ENCODE measurements at regions of chr1 and their contacts with region 1.

Region 1: GRCh38 chr1:208093754-208094719 is 150.1 kb downstream of the PLXNA2 start:
- DNase-seq: peak; percentile 78
- H3K4me3 Mint-ChIP-seq: no peak overlapping the region
- H3K27ac Mint-ChIP-seq: no peak overlapping the region
- H3K4me1 Mint-ChIP-seq: no peaks in the 10 kb centered on the region
- H3K27me3 Mint-ChIP-seq: no peaks in the 10 kb centered on the region

Region 2: DNA sequence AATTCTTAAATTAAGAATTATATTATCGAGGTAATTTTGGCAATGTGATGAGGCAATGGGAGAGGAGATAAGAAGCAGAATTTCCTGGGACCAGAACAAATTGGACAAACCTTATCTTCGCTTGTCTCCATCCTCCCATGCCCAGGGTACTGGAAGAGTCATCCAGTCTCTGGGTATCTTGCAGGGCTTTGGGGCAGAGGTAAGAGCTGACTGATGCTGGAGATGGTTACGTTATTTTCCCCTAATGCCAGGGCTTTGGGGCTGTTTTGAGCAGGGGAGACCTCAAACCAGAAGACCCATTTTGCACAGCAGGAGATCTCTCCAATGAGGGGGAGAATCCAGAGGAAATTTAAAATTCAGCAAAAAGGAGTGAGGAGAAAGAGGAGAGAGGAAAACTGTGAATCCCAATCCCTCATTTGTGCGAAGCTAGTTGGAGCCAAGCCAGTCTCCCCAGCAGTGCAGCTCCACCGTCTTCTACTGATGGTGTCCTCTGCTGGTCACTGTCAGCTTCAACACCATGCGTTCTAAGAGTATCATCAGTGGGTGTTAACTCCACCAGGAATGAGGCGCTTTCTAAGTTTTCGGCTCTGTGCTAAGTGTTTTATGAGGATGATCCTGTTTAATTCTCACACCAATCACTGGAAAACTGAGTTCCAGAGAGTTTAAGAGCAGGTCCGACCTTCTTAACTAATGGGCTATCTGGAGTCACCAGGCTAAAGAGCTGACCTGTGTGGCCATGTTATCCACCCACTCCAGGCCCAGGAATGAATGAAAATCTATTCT is 96.4 kb before region 1 on chr1:
- CTCF ChIA-PET with region 1: interaction called, 10 read pairs
- DNase-seq: peak; percentile 69
- H3K4me3 Mint-ChIP-seq: no peak overlapping the region
- H3K27ac Mint-ChIP-seq: no peak overlapping the region
- H3K4me1 Mint-ChIP-seq: no peaks in the 10 kb centered on the region
- H3K27me3 Mint-ChIP-seq: peaks cover 27% of the 10 kb centered on the region

Region 3: DNA sequence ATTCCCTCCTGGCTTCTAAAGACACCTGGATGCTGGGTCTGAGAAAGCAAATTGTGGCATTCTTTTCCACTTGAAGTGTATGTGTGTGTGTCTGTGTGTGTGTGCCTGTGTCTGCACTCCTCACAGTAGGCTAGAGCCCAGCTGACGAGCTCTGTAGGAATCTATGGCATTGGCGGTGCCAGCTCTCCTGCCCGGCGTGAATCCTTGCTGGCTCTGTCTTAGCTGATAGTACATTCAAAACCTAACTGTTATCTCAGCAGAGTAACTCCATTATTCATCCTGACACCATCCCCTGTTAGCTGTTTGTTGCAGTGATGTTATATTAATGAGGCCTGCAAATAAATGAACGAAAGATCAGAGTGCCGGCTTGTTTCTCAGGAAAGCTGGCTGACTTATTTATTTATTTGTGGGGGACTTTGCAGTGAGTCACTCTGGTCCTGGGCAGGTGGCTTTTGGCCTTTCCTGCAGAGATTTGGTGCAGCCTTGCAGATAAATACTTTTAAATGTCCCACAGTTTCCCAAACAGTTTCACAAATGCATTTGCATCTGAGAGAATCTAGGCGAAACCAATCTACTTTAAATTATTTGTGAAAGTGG is 22.5 kb before region 1 on chr1:
- CTCF ChIA-PET with region 1: interaction called, 10 read pairs
- DNase-seq: no peak
- H3K4me3 Mint-ChIP-seq: no peak overlapping the region
- H3K27ac Mint-ChIP-seq: no peak overlapping the region
- H3K4me1 Mint-ChIP-seq: no peaks in the 10 kb centered on the region
- H3K27me3 Mint-ChIP-seq: peaks cover 30% of the 10 kb centered on the region

Measured in activated naive CD4-positive, alpha-beta T cell treated with anti-CD3 and anti-CD28 coated beads, Interleukin-2, amount 10 ng/mL, durations not matched to agents 7 days and 5 days (primary cell).